Activated CD8-positive, alpha-beta T cell treated with anti-CD3 and anti-CD28 coated beads for 36 hours (primary cell): ENCODE measurements at regions of chr9 and their contacts with region 1.

Region 1: GRCh38 chr9:94002316-94003140 is 47.4 kb upstream of the BARX1 start:
- DNase-seq: peak; percentile 62
- ATAC-seq: peak; percentile 51
- H3K4me3 Mint-ChIP-seq: no peak overlapping the region
- H3K27ac Mint-ChIP-seq: no peak overlapping the region
- H3K4me1 Mint-ChIP-seq: no peaks in the 10 kb centered on the region
- H3K27me3 Mint-ChIP-seq: peaks cover 11% of the 10 kb centered on the region
- CTCF ChIP-seq: peak; percentile 79

Region 2: GRCh38 chr9:93682232-93682968 is 320.1 kb before region 1 on chr9:
- CTCF ChIA-PET with region 1: interaction called, 21 read pairs
- POLR2A ChIA-PET with region 1: no interaction called
- intact Hi-C with region 1: loop called (anchors 2 kb)
- DNase-seq: peak; percentile 78
- ATAC-seq: peak; percentile 79
- H3K4me3 Mint-ChIP-seq: no peak overlapping the region
- H3K27ac Mint-ChIP-seq: no peak overlapping the region
- H3K4me1 Mint-ChIP-seq: no peaks in the 10 kb centered on the region
- H3K27me3 Mint-ChIP-seq: no peaks in the 10 kb centered on the region
- CTCF ChIP-seq: peak; percentile 85

Region 3: GRCh38 chr9:93984860-93985259 is 17.7 kb before region 1 on chr9:
- CTCF ChIA-PET with region 1: interaction called, 10 read pairs
- POLR2A ChIA-PET with region 1: no interaction called
- intact Hi-C with region 1: no loop called
- DNase-seq: no peak
- ATAC-seq: no peak
- H3K4me3 Mint-ChIP-seq: no peak overlapping the region
- H3K27ac Mint-ChIP-seq: no peak overlapping the region
- H3K4me1 Mint-ChIP-seq: no peaks in the 10 kb centered on the region
- H3K27me3 Mint-ChIP-seq: peaks cover 23% of the 10 kb centered on the region
- CTCF ChIP-seq: no peak

Region 4: DNA sequence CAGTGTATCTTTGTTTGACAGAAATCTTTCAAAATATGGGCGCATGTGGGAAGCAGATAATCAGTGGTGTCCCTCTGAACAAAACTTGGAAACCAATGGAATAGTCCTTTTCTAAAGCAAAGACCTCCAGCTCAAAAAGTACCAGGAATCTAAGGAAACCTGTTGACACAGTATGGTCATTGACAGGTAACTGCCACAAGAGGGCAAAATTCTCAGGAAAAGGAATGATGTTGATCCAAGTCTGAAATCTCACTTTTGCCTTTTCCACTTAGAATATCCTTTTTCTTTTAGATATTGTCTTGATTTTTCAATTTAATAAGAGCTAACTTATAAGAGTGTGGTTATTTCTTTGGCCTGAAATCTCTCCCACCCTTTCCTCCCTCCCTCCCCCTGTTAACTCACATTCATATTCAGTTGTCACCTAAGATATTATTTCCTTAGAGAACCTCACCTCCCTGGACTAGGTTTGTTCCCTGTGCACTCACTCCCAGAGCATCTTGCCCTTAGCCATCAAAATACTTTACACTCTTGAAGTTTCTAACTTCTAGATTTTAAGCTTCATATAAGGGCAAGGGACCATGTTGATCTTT is 11.6 kb after region 1 on chr9:
- CTCF ChIA-PET with region 1: interaction called, 43 read pairs
- POLR2A ChIA-PET with region 1: no interaction called
- intact Hi-C with region 1: no loop called
- DNase-seq: no peak
- ATAC-seq: no peak
- H3K4me3 Mint-ChIP-seq: no peak overlapping the region
- H3K27ac Mint-ChIP-seq: no peak overlapping the region
- H3K4me1 Mint-ChIP-seq: peaks cover 12% of the 10 kb centered on the region
- H3K27me3 Mint-ChIP-seq: no peaks in the 10 kb centered on the region
- CTCF ChIP-seq: peak; percentile 64

Region 5: GRCh38 chr9:94039786-94040185 is 37.3 kb after region 1 on chr9:
- CTCF ChIA-PET with region 1: no interaction called
- POLR2A ChIA-PET with region 1: no interaction called
- intact Hi-C with region 1: no loop called
- DNase-seq: no peak
- ATAC-seq: no peak
- H3K4me3 Mint-ChIP-seq: no peak overlapping the region
- H3K27ac Mint-ChIP-seq: no peak overlapping the region
- H3K4me1 Mint-ChIP-seq: no peaks in the 10 kb centered on the region
- H3K27me3 Mint-ChIP-seq: no peaks in the 10 kb centered on the region
- CTCF ChIP-seq: no peak